GM10248 (cell line): ENCODE measurements at regions of chr12 and their contacts with region 1.

Region 1: DNA sequence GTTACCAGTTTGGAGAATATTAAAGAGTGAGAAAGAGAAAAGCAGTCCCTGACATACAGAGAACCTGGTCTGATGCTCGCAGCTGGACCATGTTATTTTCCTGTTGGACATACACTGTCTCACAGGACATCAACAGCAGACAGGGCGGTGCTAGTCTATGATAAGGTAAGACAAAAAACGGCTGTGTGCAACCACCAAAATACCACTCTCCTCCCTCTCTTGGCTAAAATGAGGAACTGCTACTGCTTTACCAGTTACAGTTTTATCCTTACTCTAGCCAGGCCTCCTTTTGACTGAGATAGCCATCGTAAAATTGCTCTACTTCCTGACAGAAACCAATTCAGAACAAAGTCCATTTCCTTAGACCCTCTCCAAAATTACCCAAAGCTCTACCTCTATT is 47.0 kb upstream of the ERGIC2 start:
- DNase-seq: peak; percentile 63
- CTCF ChIP-seq: peak; percentile 29

Region 2: DNA sequence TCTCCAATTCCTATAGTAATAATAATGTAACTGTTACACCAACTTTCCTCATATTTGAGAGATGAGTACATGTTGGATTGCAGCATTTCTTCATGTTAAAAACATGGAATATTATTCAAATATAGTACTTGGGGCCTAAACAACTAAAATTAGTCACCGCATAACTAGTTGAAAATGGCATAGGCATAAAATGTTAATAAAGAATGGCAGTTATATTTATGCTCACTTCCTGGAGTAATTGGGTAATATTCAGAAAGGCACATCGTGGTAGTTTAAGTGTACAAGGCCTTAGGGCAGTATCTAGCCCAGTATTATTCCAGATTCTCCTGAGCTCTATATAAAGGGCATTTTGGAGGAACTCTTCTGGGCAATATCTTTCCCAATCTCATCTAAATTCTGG is 93.0 kb before region 1 on chr12:
- CTCF ChIA-PET with region 1: no interaction called
- POLR2A ChIA-PET with region 1: no interaction called
- DNase-seq: no peak
- CTCF ChIP-seq: no peak

Region 3: GRCh38 chr12:29415111-29415510 is 12.9 kb before region 1 on chr12:
- CTCF ChIA-PET with region 1: interaction called, 25 read pairs
- POLR2A ChIA-PET with region 1: no interaction called
- DNase-seq: no peak
- CTCF ChIP-seq: no peak